Lower leg skin (tissue), 4 donors: ENCODE measurements at regions of chr18 and their contacts with region 1.

Region 1: GRCh38 chr18:25365242-25365641 is 13.3 kb upstream of the ZNF521 start:
- DNase-seq: no peak
- H3K4me3 ChIP-seq: no peak overlapping the region
- CTCF ChIP-seq: no peak
- POLR2A ChIP-seq: no peak

Region 2: GRCh38 chr18:23658296-23658695 is 1706.9 kb before region 1 on chr18:
- intact Hi-C with region 1: loop called (anchors 5 kb)
- DNase-seq: no peak
- H3K4me3 ChIP-seq: no peak overlapping the region
- CTCF ChIP-seq: no peak
- POLR2A ChIP-seq: no peak

Region 3: GRCh38 chr18:25669741-25670140 is 304.5 kb after region 1 on chr18:
- intact Hi-C with region 1: no loop called
- DNase-seq: no peak
- H3K4me3 ChIP-seq: no peak overlapping the region
- CTCF ChIP-seq: no peak
- POLR2A ChIP-seq: no peak